Cardiac septum (tissue), 1 donor: ENCODE measurements at regions of chr1 and their contacts with region 1.

Region 1: DNA sequence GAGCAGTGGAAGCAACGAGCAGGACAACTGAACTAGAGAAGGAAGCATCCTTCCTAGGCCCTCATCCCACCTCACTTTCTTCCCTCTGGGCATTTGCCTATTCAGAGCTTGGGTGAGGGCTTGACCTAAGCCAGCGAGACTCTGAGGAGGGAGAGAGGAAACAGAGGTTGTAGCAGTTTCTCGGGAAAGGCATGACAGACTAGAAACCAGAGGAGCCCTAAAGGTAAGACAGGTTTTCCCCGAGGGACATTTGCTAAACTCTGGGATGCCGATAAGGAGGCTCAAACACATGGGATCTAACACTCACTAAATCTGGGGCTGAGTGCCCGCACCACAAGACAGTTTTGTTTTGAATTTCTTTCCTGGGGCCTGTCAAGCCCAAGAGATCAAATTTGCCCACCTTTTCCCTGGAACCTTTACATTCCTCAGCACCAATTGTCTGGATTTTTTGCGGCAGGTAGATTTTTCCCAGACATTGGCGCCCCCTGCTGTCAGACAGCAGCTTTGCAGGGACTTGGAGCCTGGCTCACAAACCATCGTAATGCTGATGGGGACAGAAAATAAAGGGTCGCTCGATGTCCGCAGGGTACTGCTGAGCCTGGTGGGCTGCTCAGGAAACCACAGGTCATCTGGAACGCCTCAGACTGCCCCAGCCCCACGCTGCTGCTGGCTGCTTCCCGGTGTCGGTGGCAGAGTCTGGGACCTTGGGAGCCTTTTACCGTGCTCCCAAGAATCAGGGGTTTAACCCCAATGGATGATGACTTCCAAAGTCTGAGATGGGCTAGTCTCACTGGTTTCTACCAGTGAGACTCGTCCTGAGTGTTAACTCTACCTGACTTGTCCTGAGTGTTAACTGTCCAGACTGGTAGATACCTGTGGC is 23.4 kb upstream of the TSPAN2 start:
- DNase-seq: no peak

Region 2: GRCh38 chr1:115052454-115053083 is 60.2 kb before region 1 on chr1:
- intact Hi-C with region 1: loop called (anchors 5 kb)
- DNase-seq: no peak

Region 3: GRCh38 chr1:115166531-115167091 is 53.9 kb after region 1 on chr1:
- intact Hi-C with region 1: no loop called
- DNase-seq: no peak